IMR-90 (cell line): ENCODE measurements at regions of chr17 and their contacts with region 1.

Region 1: GRCh38 chr17:50478391-50479381 is at the start of gene RSAD1:
- DNase-seq: peak; percentile 88
- ATAC-seq: peak; percentile 83
- H3K4me3 ChIP-seq: peak within 1 kb of the TSS; percentile 86
- H3K27ac ChIP-seq: peak within 1 kb of the TSS; percentile 57
- H3K4me1 ChIP-seq: peaks cover 4% of the 10 kb centered on the region
- H3K27me3 ChIP-seq: no peaks in the 10 kb centered on the region; the same call in 1 of the 2 replicates
- CTCF ChIP-seq: peak; percentile 80
- POLR2A ChIP-seq: peak; percentile 86
- RAD21 ChIP-seq: peak; percentile 52
- total RNA-seq, gene RSAD1: 10.0 and 10.8 TPM in 2 replicates

Region 2: GRCh38 chr17:50361561-50362480 is 116.9 kb before region 1 on chr17:
- CTCF ChIA-PET with region 1: no interaction called
- POLR2A ChIA-PET with region 1: no interaction called
- dilution Hi-C with region 1: no loop called
- in situ Hi-C with region 1: no loop called
- intact Hi-C with region 1: loop called (anchors 1 kb)
- DNase-seq: peak; percentile 74
- ATAC-seq: peak; percentile 79
- H3K4me3 ChIP-seq: no peak overlapping the region
- H3K27ac ChIP-seq: no peak overlapping the region
- H3K4me1 ChIP-seq: peaks cover 11% of the 10 kb centered on the region
- H3K27me3 ChIP-seq: no peaks in the 10 kb centered on the region
- CTCF ChIP-seq: peak; percentile 75
- POLR2A ChIP-seq: no peak
- RAD21 ChIP-seq: peak; percentile 54

Region 3: GRCh38 chr17:50397111-50397918 is 81.4 kb before region 1 on chr17 and contains the start of gene LRRC59:
- CTCF ChIA-PET with region 1: interaction called, 3 read pairs
- POLR2A ChIA-PET with region 1: interaction called, 3 read pairs
- dilution Hi-C with region 1: no loop called
- in situ Hi-C with region 1: no loop called
- intact Hi-C with region 1: loop called (anchors 1 kb)
- DNase-seq: peak; percentile 82
- ATAC-seq: peak; percentile 98
- H3K4me3 ChIP-seq: peak within 1 kb of the TSS; percentile 96
- H3K27ac ChIP-seq: peak within 1 kb of the TSS; percentile 79
- H3K4me1 ChIP-seq: peaks cover 4% of the 10 kb centered on the region
- H3K27me3 ChIP-seq: 0 out of 2 replicates have a peak, but pooled peaks cover 2% of the 10 kb centered on the region
- CTCF ChIP-seq: peak; percentile 99
- POLR2A ChIP-seq: peak; percentile 95
- RAD21 ChIP-seq: peak; percentile 56
- total RNA-seq, gene LRRC59: 233 and 241 TPM in 2 replicates

Region 4: DNA sequence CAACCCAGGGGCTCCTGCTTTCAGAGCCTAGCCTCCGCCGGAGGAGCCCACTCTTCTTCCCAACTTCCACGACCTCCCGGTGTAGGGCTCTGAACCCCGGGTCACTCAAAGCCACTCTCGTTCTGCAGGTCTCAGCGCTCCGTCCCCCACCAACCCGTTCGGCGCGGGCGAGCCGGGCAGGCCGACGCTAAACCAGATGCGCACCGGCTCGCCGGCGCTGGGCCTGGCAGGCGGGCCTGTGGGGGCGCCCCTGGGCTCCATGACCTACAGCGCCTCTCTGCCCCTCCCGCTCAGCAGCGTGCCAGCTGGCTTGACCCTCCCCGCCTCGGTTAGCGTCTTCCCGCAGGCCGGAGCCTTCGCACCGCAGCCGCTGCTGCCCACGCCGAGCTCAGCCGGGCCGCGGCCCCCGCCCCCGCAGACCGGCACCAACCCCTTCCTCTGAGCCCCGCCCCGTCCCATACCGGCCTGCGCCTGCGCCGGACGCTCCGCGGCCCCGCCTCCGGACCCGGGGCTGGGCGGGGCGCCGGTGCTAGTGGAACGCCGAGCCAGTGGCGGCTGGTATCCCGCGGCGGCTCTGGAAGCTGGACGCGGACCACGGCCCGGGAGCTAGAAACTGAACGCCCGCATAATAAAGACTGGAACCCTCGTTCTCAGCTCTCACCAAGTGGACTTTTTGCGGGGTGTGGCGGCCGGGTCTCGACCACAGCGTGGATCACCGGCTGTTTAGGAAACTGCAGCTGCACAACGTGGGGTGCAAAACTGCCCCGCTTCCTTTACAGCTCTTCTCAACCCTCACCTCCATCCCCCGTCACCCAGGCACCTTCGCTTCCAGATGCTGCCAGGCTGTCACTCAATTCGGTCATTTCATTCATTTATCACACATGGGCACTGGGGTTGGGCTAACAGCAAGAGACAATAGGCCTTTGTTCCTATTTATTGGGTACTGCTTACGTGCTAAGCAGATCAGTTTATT is 63.3 kb after region 1 on chr17:
- CTCF ChIA-PET with region 1: interaction called, 6 read pairs
- POLR2A ChIA-PET with region 1: no interaction called
- dilution Hi-C with region 1: no loop called
- in situ Hi-C with region 1: no loop called
- intact Hi-C with region 1: loop called (anchors 1 kb)
- DNase-seq: peak; percentile 69
- ATAC-seq: peak; percentile 95
- H3K4me3 ChIP-seq: peak overlapping the region; percentile 65
- H3K27ac ChIP-seq: peak overlapping the region; percentile 55
- H3K4me1 ChIP-seq: peaks cover 14% of the 10 kb centered on the region; the same call in 1 of the 2 replicates
- H3K27me3 ChIP-seq: no peaks in the 10 kb centered on the region
- CTCF ChIP-seq: 0 out of 2 replicates have a peak, but pooled peaks have one; percentile 23
- POLR2A ChIP-seq: no peak
- RAD21 ChIP-seq: no peak

Region 5: GRCh38 chr17:50626037-50626574 is 147.4 kb after region 1 on chr17:
- CTCF ChIA-PET with region 1: no interaction called
- POLR2A ChIA-PET with region 1: no interaction called
- dilution Hi-C with region 1: no loop called
- in situ Hi-C with region 1: no loop called
- intact Hi-C with region 1: loop called (anchors 1 kb)
- DNase-seq: peak; percentile 62
- ATAC-seq: peak; percentile 84
- H3K4me3 ChIP-seq: no peak overlapping the region
- H3K27ac ChIP-seq: no peak overlapping the region
- H3K4me1 ChIP-seq: peaks cover 5% of the 10 kb centered on the region
- H3K27me3 ChIP-seq: peaks cover 7% of the 10 kb centered on the region; the same call in 1 of the 2 replicates
- CTCF ChIP-seq: peak; percentile 70
- POLR2A ChIP-seq: no peak
- RAD21 ChIP-seq: peak; percentile 79

Region 6: GRCh38 chr17:50689251-50689650 is 210.6 kb after region 1 on chr17:
- CTCF ChIA-PET with region 1: interaction called, 4 read pairs
- POLR2A ChIA-PET with region 1: no interaction called
- dilution Hi-C with region 1: no loop called
- in situ Hi-C with region 1: loop called (anchors 10 kb)
- intact Hi-C with region 1: no loop called
- DNase-seq: peak; percentile 66
- ATAC-seq: peak; percentile 56
- H3K4me3 ChIP-seq: no peak overlapping the region
- H3K27ac ChIP-seq: no peak overlapping the region
- H3K4me1 ChIP-seq: peaks cover 50% of the 10 kb centered on the region
- H3K27me3 ChIP-seq: no peaks in the 10 kb centered on the region
- CTCF ChIP-seq: no peak
- POLR2A ChIP-seq: no peak
- RAD21 ChIP-seq: no peak

Region 7: GRCh38 chr17:50841949-50842354 is 363.3 kb after region 1 on chr17:
- CTCF ChIA-PET with region 1: no interaction called
- POLR2A ChIA-PET with region 1: no interaction called
- dilution Hi-C with region 1: no loop called
- in situ Hi-C with region 1: no loop called
- intact Hi-C with region 1: loop called (anchors 5 kb)
- DNase-seq: peak; percentile 58
- ATAC-seq: peak; percentile 85
- H3K4me3 ChIP-seq: no peak overlapping the region
- H3K27ac ChIP-seq: no peak overlapping the region
- H3K4me1 ChIP-seq: peaks cover 6% of the 10 kb centered on the region; the same call in 1 of the 2 replicates
- H3K27me3 ChIP-seq: peaks cover 3% of the 10 kb centered on the region; the same call in 1 of the 2 replicates
- CTCF ChIP-seq: peak; percentile 88
- POLR2A ChIP-seq: no peak
- RAD21 ChIP-seq: peak; percentile 84